ENCODE measurements at regions of chr5 and their contacts with region 1.

Region 1: DNA sequence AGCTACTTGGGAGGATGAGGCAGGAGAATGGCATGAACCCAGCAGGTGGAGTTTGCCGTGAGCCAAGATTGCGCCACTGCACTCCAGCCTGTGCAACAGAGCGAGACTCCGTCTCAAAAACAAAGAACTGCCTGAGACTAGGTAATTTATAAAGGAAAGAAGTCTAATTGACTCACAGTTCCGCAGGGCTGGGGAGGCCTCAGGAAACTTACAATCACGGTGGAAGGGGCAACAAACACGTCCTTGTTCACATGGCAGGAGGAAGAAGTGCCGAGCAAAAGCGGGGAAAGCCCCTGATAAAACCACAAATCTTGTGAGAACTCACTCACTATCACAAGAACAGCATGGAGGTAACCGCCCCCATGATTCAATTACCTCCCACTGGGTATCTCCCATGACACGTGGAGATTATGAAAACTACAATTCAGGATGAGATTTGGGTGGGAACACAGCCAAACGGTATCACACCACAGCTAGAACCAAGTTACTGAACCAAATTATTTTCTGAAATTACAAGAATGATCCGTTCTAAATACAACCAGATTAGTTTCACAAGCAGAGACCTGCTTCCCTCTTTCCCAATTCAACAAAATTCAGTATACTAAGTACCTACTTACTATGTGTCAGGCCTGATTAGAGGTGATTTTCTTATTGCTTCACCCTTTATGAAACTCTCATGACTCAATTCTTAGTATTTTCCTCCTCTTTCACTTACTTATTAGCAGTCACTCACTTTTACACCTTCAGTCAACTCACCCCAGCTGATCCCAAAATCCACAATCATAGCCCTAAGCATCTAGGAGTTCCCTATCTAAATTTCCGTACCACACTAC is 8.4 kb downstream of the UBTD2 start:
- DNase-seq: peak; percentile 55
- ATAC-seq: peak; percentile 79
- H3K4me3 ChIP-seq: peak overlapping the region; percentile 49; the same call in 1 of the 2 replicates
- H3K27ac ChIP-seq: peak overlapping the region; percentile 66
- H3K4me1 ChIP-seq: peaks cover 17% of the 10 kb centered on the region
- H3K27me3 ChIP-seq: no peaks in the 10 kb centered on the region
- CTCF ChIP-seq: no peak
- EP300 ChIP-seq: no peak
- POLR2A ChIP-seq: no peak
- RAD21 ChIP-seq: no peak

Region 2: GRCh38 chr5:172235132-172235780 is 39.9 kb before region 1 on chr5:
- CTCF ChIA-PET with region 1: no interaction called
- POLR2A ChIA-PET with region 1: no interaction called
- RAD21 ChIA-PET with region 1: no interaction called
- SMC1A ChIA-PET with region 1: no interaction called
- in situ Hi-C with region 1: no loop called
- intact Hi-C with region 1: loop called (anchors 5 kb)
- DNase-seq: peak; percentile 59
- ATAC-seq: peak; percentile 84
- H3K4me3 ChIP-seq: peak overlapping the region; percentile 28; the same call in 1 of the 2 replicates
- H3K27ac ChIP-seq: peak overlapping the region; percentile 65
- H3K4me1 ChIP-seq: peaks cover 37% of the 10 kb centered on the region
- H3K27me3 ChIP-seq: no peaks in the 10 kb centered on the region
- CTCF ChIP-seq: no peak
- EP300 ChIP-seq: no peak
- POLR2A ChIP-seq: no peak
- RAD21 ChIP-seq: no peak

Region 3: GRCh38 chr5:172640822-172641358 is 365.8 kb after region 1 on chr5 and contains the start of gene NEURL1B:
- CTCF ChIA-PET with region 1: no interaction called
- POLR2A ChIA-PET with region 1: no interaction called
- RAD21 ChIA-PET with region 1: no interaction called
- SMC1A ChIA-PET with region 1: no interaction called
- in situ Hi-C with region 1: no loop called
- intact Hi-C with region 1: no loop called
- DNase-seq: no peak
- ATAC-seq: peak; percentile 75
- H3K4me3 ChIP-seq: peak within 1 kb of the TSS; percentile 53; the same call in 1 of the 2 replicates
- H3K27ac ChIP-seq: no peak within 1 kb of the TSS
- H3K4me1 ChIP-seq: no peaks in the 10 kb centered on the region
- H3K27me3 ChIP-seq: peaks cover 15 to 21% of the 10 kb centered on the region in 2 experiments
- CTCF ChIP-seq: no peak
- EP300 ChIP-seq: no peak
- POLR2A ChIP-seq: peak; percentile 41; the same call in 1 of the 2 replicates
- RAD21 ChIP-seq: no peak
- polyA plus RNA-seq, gene NEURL1B: not detected